ENCODE measurements at regions of chrX and their contacts with region 1.

Region 1: GRCh38 chrX:129982274-129983251 is at the start of gene BCORL1:
- DNase-seq: peak; percentile 97
- H3K4me3 ChIP-seq: no peak within 1 kb of the TSS
- H3K27ac ChIP-seq: peak within 1 kb of the TSS in 1 of 4 donors; percentile 86
- H3K4me1 ChIP-seq: peaks cover 0 to 6% (median 3%) of the 10 kb centered on the region in 4 donors
- H3K27me3 ChIP-seq: no peaks in the 10 kb centered on the region
- CTCF ChIP-seq: no peak
- EP300 ChIP-seq: no peak
- POLR2A ChIP-seq: peak; percentile 59 to 79
- total RNA-seq, gene BCORL1: 2.2 to 5.8 (median 4.2) TPM

Region 2: DNA sequence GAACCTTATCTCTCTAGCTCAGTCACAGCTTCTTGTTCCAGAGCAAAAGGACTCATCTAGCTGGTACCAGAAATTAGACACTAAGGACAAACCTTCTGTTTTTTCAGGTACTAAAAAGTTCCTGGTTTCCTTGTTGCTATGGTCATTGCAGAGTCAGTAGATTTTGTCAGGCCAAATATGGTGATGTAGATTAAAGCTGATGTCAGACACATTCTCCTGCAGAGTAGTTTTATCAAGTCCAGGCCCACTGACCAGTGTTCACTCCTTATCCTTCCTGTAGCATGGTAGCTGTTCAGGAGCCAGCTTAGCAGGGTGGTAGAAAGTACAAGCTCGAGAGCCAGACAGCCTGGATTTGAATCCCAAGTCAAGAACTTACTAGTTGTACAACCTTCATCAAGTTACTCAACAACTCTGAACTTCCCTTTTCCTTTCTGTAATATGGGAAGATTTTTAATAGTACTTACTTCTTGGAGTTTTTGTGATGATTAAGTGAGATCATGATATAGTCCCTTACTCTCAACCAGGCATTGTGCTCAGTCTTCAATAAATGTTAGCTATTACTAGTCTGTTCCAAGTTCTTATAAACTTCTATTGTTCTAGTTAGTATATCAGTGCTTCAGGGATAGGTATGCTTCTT is 424.6 kb before region 1 on chrX:
- intact Hi-C with region 1: no loop called
- DNase-seq: no peak
- H3K4me3 ChIP-seq: no peak overlapping the region
- H3K27ac ChIP-seq: no peak overlapping the region
- H3K4me1 ChIP-seq: no peaks in the 10 kb centered on the region
- H3K27me3 ChIP-seq: no peaks in the 10 kb centered on the region
- CTCF ChIP-seq: no peak
- EP300 ChIP-seq: no peak
- POLR2A ChIP-seq: no peak

Region 3: GRCh38 chrX:129931411-129932015 is 51.0 kb before region 1 on chrX:
- intact Hi-C with region 1: loop called (anchors 1 kb)
- DNase-seq: peak; percentile 97
- H3K4me3 ChIP-seq: peak overlapping the region; percentile 39 to 58 (median 56)
- H3K27ac ChIP-seq: peak overlapping the region; percentile 85 to 88 (median 86)
- H3K4me1 ChIP-seq: no peaks in the 10 kb centered on the region
- H3K27me3 ChIP-seq: no peaks in the 10 kb centered on the region
- CTCF ChIP-seq: no peak
- EP300 ChIP-seq: no peak
- POLR2A ChIP-seq: peak in 1 of 2 donors; percentile 44

Region 4: GRCh38 chrX:129957241-129958082 is 25.1 kb before region 1 on chrX:
- intact Hi-C with region 1: loop called (anchors 2 kb)
- DNase-seq: peak; percentile 73
- H3K4me3 ChIP-seq: peak overlapping the region; percentile 21 to 51 (median 46)
- H3K27ac ChIP-seq: peak overlapping the region; percentile 58 to 65 (median 62)
- H3K4me1 ChIP-seq: peaks cover 0 to 10% (median 5%) of the 10 kb centered on the region in 4 donors
- H3K27me3 ChIP-seq: no peaks in the 10 kb centered on the region
- CTCF ChIP-seq: no peak
- EP300 ChIP-seq: no peak
- POLR2A ChIP-seq: no peak

Region 5: GRCh38 chrX:130028196-130028595 is 45.6 kb after region 1 on chrX:
- intact Hi-C with region 1: loop called (anchors 5 kb)
- DNase-seq: no peak
- H3K4me3 ChIP-seq: no peak overlapping the region
- H3K27ac ChIP-seq: no peak overlapping the region
- H3K4me1 ChIP-seq: peaks cover 0 to 6% (median 3%) of the 10 kb centered on the region in 4 donors
- H3K27me3 ChIP-seq: no peaks in the 10 kb centered on the region
- CTCF ChIP-seq: peak; percentile 27 to 62 (median 39)
- EP300 ChIP-seq: no peak
- POLR2A ChIP-seq: no peak

Region 6: GRCh38 chrX:130060122-130061069 is 77.8 kb after region 1 on chrX:
- intact Hi-C with region 1: loop called (anchors 2 kb)
- DNase-seq: peak; percentile 86
- H3K4me3 ChIP-seq: peak overlapping the region; percentile 30 to 58 (median 54)
- H3K27ac ChIP-seq: peak overlapping the region; percentile 55 to 76 (median 72)
- H3K4me1 ChIP-seq: peaks cover 0 to 21% (median 7%) of the 10 kb centered on the region in 4 donors
- H3K27me3 ChIP-seq: no peaks in the 10 kb centered on the region
- CTCF ChIP-seq: peak; percentile 67 to 88 (median 75)
- EP300 ChIP-seq: no peak
- POLR2A ChIP-seq: no peak